Common myeloid progenitor, CD34-positive (primary cell): ENCODE measurements at regions of chr18 and their contacts with region 1.

Region 1: GRCh38 chr18:4106407-4107033 is 348.6 kb downstream of the DLGAP1 start:
- DNase-seq: peak; percentile 43 to 77 (median 67)
- H3K4me3 ChIP-seq: no peak overlapping the region
- H3K27ac ChIP-seq: no peak overlapping the region
- H3K4me1 ChIP-seq: no peaks in the 10 kb centered on the region
- H3K27me3 ChIP-seq: peaks cover 0 to 6% (median 0%) of the 10 kb centered on the region in 5 experiments

Region 2: DNA sequence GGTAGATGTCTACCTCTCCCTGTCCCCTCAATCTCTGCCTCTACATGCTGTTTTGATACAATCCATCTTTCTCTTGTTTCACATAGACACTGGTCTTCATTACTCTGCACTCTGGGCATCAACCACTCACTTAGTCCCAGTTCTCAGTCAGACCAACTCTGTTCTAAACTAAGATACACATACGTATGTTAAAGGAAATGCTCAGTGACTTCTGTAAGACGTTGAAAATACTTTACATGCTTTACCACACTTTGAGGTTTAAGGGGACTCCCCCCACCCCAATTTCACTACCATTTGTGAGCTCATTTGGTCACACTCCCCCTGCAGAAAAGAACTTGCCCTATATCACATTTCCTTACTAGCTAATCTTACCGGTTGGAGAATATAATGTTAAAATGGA is 159.1 kb before region 1 on chr18:
- CTCF ChIA-PET with region 1: no interaction called
- POLR2A ChIA-PET with region 1: no interaction called
- DNase-seq: no peak
- H3K4me3 ChIP-seq: no peak overlapping the region
- H3K27ac ChIP-seq: no peak overlapping the region
- H3K4me1 ChIP-seq: no peaks in the 10 kb centered on the region
- H3K27me3 ChIP-seq: peaks cover 0 to 2% (median 0%) of the 10 kb centered on the region in 5 experiments

Region 3: GRCh38 chr18:4093676-4094075 is 12.8 kb before region 1 on chr18:
- CTCF ChIA-PET with region 1: interaction called, 19 read pairs
- POLR2A ChIA-PET with region 1: no interaction called
- DNase-seq: peak in 1 of 3 donors; percentile 1
- H3K4me3 ChIP-seq: no peak overlapping the region
- H3K27ac ChIP-seq: no peak overlapping the region
- H3K4me1 ChIP-seq: peaks cover 0 to 3% (median 0%) of the 10 kb centered on the region in 4 experiments
- H3K27me3 ChIP-seq: no peaks in the 10 kb centered on the region

Region 4: GRCh38 chr18:4181882-4182568 is 75.5 kb after region 1 on chr18:
- CTCF ChIA-PET with region 1: no interaction called
- POLR2A ChIA-PET with region 1: no interaction called
- DNase-seq: peak in 1 of 3 donors; percentile 1
- H3K4me3 ChIP-seq: no peak overlapping the region
- H3K27ac ChIP-seq: no peak overlapping the region
- H3K4me1 ChIP-seq: no peaks in the 10 kb centered on the region
- H3K27me3 ChIP-seq: no peaks in the 10 kb centered on the region